H1 (cell line): ENCODE measurements at regions of chr22 and their contacts with region 1.

Region 1: GRCh38 chr22:32836280-32837123 is 35.0 kb downstream of the TIMP3 start:
- DNase-seq: no peak
- H3K4me3 ChIP-seq: no peak overlapping the region
- H3K27ac ChIP-seq: no peak overlapping the region
- H3K4me1 ChIP-seq: peaks cover 0 to 3% (median 0%) of the 10 kb centered on the region in 4 experiments; a peak in 3 of 7 replicates
- H3K27me3 ChIP-seq: no peaks in the 10 kb centered on the region
- CTCF ChIP-seq: peak in 1 of 3 experiments; percentile 40; a peak in 1 of 4 replicates
- EP300 ChIP-seq: no peak
- POLR2A ChIP-seq: no peak
- RAD21 ChIP-seq: no peak

Region 2: DNA sequence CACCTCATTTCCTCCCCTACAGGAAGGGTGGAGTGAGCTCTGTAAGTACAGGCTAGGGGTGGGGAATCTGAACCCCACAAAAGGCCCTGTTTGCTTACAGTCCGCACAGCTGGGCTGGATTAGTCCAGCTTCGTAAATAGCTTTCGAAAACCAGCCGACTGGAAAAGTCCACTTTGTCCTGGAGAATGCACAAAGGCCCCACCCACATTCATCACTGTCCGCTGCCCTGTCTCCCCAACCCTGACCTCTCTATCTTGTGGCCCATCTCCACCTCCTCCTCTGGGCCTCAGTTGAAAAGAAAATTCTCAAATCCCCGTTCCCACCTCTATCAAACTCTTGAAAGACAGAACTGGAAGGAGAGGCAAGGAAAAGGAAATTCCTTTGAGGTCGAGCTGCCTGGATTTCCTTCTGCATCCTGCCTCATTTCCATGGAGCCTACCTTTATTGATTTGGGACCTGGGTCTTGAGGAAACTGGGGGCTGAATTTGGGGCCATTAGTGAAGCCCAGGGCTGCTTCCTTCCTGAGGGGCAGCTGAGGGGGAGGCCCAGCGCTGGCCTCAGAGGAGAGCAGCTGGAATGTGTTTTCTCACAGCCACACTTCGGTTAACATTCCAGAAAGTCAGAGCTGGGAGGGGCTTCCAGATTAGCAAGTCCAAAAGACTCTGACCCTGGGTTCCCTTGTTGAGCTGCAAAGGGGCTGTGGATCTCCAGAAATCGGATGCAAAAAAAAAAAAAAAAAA is 214.3 kb before region 1 on chr22:
- CTCF ChIA-PET with region 1: no interaction called
- POLR2A ChIA-PET with region 1: no interaction called
- DNase-seq: peak; percentile 21 to 50
- H3K4me3 ChIP-seq: peak overlapping the region in 1 of 4 experiments; percentile 17; a peak in 1 of 8 replicates
- H3K27ac ChIP-seq: peak overlapping the region; percentile 31; the same call in 1 of the 2 replicates
- H3K4me1 ChIP-seq: peaks cover 2 to 11% (median 7%) of the 10 kb centered on the region in 4 experiments
- H3K27me3 ChIP-seq: peaks cover 0 to 6% (median 1%) of the 10 kb centered on the region in 4 experiments; a peak in 3 of 7 replicates
- CTCF ChIP-seq: no peak
- EP300 ChIP-seq: 0 out of 3 replicates have a peak, but pooled peaks of 1 of the 2 experiments have one; percentile 14
- POLR2A ChIP-seq: no peak
- RAD21 ChIP-seq: no peak

Region 3: GRCh38 chr22:32823024-32823730 is 13.3 kb before region 1 on chr22:
- CTCF ChIA-PET with region 1: interaction called, 39 read pairs
- POLR2A ChIA-PET with region 1: no interaction called
- DNase-seq: peak; percentile 59 to 70
- H3K4me3 ChIP-seq: no peak overlapping the region
- H3K27ac ChIP-seq: no peak overlapping the region
- H3K4me1 ChIP-seq: peaks cover 0 to 2% (median 0%) of the 10 kb centered on the region in 4 experiments; a peak in 2 of 7 replicates
- H3K27me3 ChIP-seq: no peaks in the 10 kb centered on the region
- CTCF ChIP-seq: peak; percentile 73 to 91 (median 77)
- EP300 ChIP-seq: no peak
- POLR2A ChIP-seq: no peak
- RAD21 ChIP-seq: peak; percentile 59 to 75

Region 4: DNA sequence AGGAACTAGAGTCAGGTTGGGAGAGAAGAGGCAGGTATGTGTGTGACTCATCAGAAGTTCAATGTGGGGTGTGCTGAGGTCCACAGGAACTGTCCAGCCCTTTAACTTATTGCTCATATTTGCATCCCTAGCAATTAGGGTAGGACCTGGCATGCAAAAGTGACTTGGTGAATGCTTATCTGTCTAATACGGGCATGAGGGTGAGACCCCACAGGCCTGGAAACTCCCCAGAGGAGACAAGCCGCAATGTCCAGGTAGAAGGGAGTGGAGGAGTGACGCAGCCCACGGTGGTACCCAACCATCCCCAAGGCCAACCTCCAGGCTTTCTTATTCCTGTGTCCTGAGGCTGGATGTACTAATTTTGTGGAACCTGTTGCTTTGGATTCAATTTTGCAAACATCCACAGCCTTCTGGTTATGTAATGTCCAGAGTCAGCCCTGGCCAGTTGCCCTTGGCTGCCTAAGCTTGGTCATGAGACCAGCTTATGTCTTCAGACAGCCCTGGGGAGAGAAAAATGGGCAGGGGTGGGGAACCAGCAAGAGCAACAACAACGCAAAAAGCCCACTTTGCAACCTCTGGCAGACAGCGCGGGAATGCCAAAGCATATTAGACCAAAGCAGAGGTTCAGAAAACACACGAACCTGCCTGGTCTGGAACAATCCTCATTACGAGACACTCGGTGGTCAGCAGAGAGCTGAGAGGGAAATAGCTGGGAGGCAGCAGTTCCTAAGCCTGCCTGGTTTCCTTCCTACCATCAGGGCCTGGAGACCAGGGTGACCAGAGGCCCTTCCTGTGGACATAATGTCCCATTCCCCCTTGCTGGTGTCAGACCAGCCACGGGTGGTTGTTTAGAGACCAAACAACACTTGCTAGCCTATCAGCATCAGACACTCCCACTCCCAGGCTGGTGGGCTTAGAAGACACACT is 14.4 kb after region 1 on chr22:
- CTCF ChIA-PET with region 1: interaction called, 41 read pairs
- POLR2A ChIA-PET with region 1: interaction called, 3 read pairs
- DNase-seq: no peak
- H3K4me3 ChIP-seq: no peak overlapping the region
- H3K27ac ChIP-seq: no peak overlapping the region
- H3K4me1 ChIP-seq: no peaks in the 10 kb centered on the region
- H3K27me3 ChIP-seq: no peaks in the 10 kb centered on the region
- CTCF ChIP-seq: no peak
- EP300 ChIP-seq: no peak
- POLR2A ChIP-seq: no peak
- RAD21 ChIP-seq: no peak

Region 5: GRCh38 chr22:32932176-32932575 is 95.7 kb after region 1 on chr22:
- CTCF ChIA-PET with region 1: no interaction called
- POLR2A ChIA-PET with region 1: no interaction called
- DNase-seq: no peak
- H3K4me3 ChIP-seq: no peak overlapping the region
- H3K27ac ChIP-seq: no peak overlapping the region
- H3K4me1 ChIP-seq: no peaks in the 10 kb centered on the region
- H3K27me3 ChIP-seq: no peaks in the 10 kb centered on the region
- CTCF ChIP-seq: no peak
- EP300 ChIP-seq: no peak
- POLR2A ChIP-seq: no peak
- RAD21 ChIP-seq: no peak

Region 6: DNA sequence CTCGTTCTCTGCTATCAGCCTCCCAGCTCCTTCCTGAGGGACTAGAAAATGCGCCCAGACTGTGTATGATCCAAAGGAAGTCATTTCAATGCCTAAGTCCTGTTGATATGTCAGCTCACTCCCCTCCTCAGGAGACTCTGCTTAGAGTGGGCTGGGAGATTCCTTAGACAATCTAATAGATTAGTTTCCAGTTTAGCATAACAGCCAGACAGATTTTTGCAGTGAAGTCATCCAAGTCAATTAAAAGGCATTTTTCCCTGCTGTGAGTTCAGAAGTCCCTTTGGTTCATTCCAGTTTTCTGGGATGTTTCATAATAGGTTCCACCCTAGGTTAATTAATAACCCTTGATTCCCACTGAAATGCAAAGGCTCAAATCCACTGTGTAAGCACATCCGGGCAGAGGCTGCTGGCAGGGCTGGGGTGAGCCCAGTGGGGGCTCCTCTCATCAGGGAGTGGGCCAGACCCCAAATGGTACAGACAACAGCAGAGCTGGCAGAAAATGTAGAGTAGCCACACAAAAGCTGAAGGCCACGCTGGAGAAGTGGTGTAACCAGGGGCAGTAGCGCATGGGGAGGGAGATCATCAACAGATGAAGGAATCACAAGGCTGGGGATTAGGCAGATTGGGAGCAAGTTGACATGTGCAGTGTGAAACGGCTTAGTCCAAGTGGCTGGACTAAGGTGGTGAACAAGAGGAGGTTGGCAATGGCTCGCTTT is 131.0 kb after region 1 on chr22:
- CTCF ChIA-PET with region 1: no interaction called
- POLR2A ChIA-PET with region 1: no interaction called
- DNase-seq: no peak
- H3K4me3 ChIP-seq: no peak overlapping the region
- H3K27ac ChIP-seq: no peak overlapping the region
- H3K4me1 ChIP-seq: peaks cover 0 to 5% (median 2%) of the 10 kb centered on the region in 4 experiments; a peak in 1 of 7 replicates
- H3K27me3 ChIP-seq: no peaks in the 10 kb centered on the region
- CTCF ChIP-seq: no peak
- EP300 ChIP-seq: no peak
- POLR2A ChIP-seq: no peak
- RAD21 ChIP-seq: no peak